Sigmoid colon (tissue), 7 donors: ENCODE measurements at regions of chr12 and their contacts with region 1.

Region 1: DNA sequence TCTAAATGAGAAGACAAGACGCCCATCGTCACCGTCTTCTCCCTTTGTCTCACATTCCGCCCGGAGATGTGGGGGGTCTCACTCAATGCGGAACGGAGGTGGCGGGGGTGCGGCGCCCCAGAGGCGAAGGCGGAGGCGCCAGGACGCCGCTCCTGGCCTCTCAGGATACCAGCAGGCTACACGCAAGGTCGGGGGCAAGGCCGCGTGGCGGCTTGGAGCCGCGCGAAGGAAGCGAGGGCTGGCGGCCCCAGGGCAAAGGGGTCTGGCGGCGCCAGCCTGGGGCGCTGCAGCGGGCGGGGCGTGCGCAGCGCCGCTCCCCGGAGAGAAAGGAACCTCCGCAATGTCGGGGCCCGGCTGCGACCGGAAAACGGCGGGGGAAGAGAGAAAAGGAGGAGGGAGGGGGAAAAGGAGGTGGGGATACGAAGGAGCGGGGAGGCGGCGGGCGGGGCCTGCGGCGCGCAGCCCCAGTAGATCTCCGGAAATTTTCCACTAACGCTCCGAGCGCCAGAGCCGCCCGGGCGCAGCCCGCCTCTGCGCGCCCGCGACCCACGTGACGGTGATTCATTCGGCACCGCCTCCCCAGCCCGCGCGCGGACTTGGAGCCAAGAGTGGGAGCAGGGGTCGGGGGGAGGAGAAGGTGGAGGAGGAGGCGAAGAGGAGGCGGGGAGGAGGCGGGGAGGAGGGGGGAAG is 10.5 kb upstream of the SLC38A2 start:
- DNase-seq: peak; percentile 99
- H3K4me3 ChIP-seq: peak overlapping the region; percentile 66 to 80 (median 74)
- H3K27ac ChIP-seq: peak overlapping the region; percentile 97 to 100 (median 99)
- H3K4me1 ChIP-seq: peaks cover 0 to 51% (median 45%) of the 10 kb centered on the region in 4 donors
- H3K27me3 ChIP-seq: no peaks in the 10 kb centered on the region
- CTCF ChIP-seq: no peak
- EP300 ChIP-seq: peak in 1 of 4 donors; percentile 89
- POLR2A ChIP-seq: peak in 1 of 2 donors; percentile 51

Region 2: GRCh38 chr12:46473634-46474329 is 90.7 kb after region 1 on chr12:
- intact Hi-C with region 1: loop called (anchors 5 kb)
- DNase-seq: peak; percentile 81
- H3K4me3 ChIP-seq: no peak overlapping the region
- H3K27ac ChIP-seq: peak overlapping the region; percentile 68 to 88 (median 73)
- H3K4me1 ChIP-seq: peaks cover 0 to 43% (median 31%) of the 10 kb centered on the region in 4 donors
- H3K27me3 ChIP-seq: no peaks in the 10 kb centered on the region
- CTCF ChIP-seq: no peak
- EP300 ChIP-seq: peak in 3 of 4 donors; percentile 22 to 44 (median 28)
- POLR2A ChIP-seq: no peak

Region 3: DNA sequence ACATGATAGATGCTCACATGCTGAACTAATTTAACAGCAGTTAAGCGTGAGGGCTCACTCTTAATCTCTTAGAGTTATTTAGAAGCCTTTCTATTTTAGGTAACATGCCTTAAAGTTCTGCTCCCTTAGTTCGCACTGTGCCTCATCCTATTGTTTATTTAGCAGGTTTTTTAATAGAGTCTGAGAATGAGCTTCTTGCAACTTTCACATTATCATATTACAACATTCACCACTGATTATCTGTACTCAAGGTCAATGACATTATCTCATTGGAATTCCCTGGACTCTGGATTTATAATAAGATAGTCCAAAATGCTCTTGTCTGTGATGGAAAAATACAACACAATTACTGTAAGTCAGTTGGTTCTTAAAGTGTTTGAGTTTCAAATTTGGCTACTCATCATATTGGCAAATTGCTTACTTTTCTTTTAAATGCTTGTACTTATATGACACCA is 173.0 kb after region 1 on chr12:
- intact Hi-C with region 1: loop called (anchors 5 kb)
- DNase-seq: no peak
- H3K4me3 ChIP-seq: no peak overlapping the region
- H3K27ac ChIP-seq: peak overlapping the region; percentile 35 to 82 (median 72)
- H3K4me1 ChIP-seq: peaks cover 0 to 71% (median 44%) of the 10 kb centered on the region in 4 donors
- H3K27me3 ChIP-seq: no peaks in the 10 kb centered on the region
- CTCF ChIP-seq: no peak
- EP300 ChIP-seq: peak in 1 of 4 donors; percentile 72
- POLR2A ChIP-seq: no peak

Region 4: DNA sequence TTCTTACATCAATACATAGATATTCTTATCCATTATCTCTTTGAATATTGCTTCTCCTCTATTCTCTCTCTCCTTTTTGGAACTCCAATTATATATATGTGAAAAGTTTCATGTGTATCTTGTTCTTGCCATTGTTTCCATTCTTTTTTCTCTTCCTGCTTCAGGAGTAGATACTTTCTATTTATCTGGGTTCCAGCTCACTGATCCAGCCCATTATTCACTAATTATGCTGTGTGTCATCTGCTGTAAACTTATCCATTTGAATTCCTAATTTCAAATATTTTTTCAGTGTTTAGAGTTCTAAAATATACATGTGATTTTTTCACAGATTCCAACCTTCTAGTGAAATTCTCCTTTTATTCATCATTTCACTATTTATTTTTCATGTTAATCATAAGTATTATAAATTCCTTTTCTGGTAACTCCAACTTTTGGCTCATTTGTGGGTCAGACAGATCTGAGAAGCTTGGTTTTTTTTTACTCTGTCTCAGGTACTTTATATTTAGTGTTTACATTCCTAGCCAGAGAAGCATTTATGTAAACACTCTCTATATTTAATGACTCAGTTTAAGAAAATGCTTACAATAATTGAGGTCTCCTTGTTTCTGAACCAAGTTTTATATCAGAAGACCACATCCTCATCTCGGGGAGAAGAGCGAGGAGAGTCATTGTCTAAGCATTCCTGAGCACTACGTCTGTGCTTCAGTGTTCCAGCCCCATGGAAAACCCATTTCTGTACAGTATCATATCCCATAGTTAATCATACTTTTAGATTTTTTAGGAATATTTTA is 712.5 kb after region 1 on chr12:
- intact Hi-C with region 1: loop called (anchors 10 kb)
- DNase-seq: no peak
- H3K4me3 ChIP-seq: no peak overlapping the region
- H3K27ac ChIP-seq: peak overlapping the region in 3 of 4 donors; percentile 31 to 97 (median 60)
- H3K4me1 ChIP-seq: peaks cover 0 to 69% (median 39%) of the 10 kb centered on the region in 4 donors
- H3K27me3 ChIP-seq: no peaks in the 10 kb centered on the region
- CTCF ChIP-seq: no peak
- EP300 ChIP-seq: no peak
- POLR2A ChIP-seq: no peak

Region 5: DNA sequence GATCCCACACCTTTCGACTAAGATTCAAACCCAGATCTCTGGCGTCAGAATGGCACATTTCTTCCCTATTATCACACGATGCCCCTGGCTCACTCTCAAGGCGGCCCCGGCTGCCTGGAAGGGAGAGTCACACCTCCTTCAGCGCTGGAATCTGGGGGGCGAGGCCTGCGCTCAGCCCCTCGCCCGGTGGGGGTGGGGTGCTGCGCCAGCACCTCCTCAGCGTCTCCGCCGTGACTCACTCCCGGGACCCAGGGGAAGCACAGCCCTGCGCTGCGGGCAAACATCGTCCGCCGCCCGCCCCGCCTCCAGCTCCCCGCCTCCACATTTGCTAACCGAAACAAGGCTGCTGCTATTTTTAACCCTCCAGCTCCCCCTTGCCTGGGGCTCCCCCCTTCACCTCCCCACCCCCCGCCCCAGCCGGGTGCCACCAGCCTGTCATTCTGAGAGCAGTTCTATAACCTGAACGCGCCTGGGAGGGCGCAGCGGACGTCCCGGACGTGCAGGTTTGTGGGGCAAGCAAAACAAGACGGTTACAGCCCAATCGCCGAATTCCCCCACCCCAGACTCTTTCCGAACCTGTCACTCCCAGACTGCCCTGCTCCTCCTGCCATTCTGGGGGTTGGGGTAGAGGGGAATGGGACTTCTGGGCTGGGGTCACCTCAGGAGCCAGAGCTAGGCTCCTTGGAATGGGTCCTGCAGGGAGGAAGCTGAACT is 1429.8 kb after region 1 on chr12:
- intact Hi-C with region 1: loop called (anchors 10 kb)
- DNase-seq: peak; percentile 96
- H3K4me3 ChIP-seq: peak overlapping the region; percentile 31 to 48 (median 42)
- H3K27ac ChIP-seq: peak overlapping the region; percentile 98 to 99 (median 99)
- H3K4me1 ChIP-seq: peaks cover 0 to 100% (median 98%) of the 10 kb centered on the region in 4 donors
- H3K27me3 ChIP-seq: no peaks in the 10 kb centered on the region
- CTCF ChIP-seq: peak in 1 of 4 experiments; percentile 9
- EP300 ChIP-seq: peak in 1 of 4 donors; percentile 31
- POLR2A ChIP-seq: peak in 1 of 2 donors; percentile 43